CD4-positive, alpha-beta T cell (primary cell): ENCODE measurements at regions of chr12 and their contacts with region 1.

Region 1: GRCh38 chr12:107884769-107885694 is 110.5 kb downstream of the ASCL4 start:
- DNase-seq: peak in 10 of 14 experiments; percentile 4 to 67 (median 22)
- ATAC-seq: no peak
- H3K4me3 ChIP-seq: no peak overlapping the region
- H3K4me3 Mint-ChIP-seq: no peak overlapping the region
- H3K27ac ChIP-seq: no peak overlapping the region
- H3K27ac Mint-ChIP-seq: no peak overlapping the region
- H3K4me1 ChIP-seq: no peaks in the 10 kb centered on the region
- H3K4me1 Mint-ChIP-seq: no peaks in the 10 kb centered on the region
- H3K27me3 ChIP-seq: peaks cover 0 to 7% of the 10 kb centered on the region in 2 experiments
- H3K27me3 Mint-ChIP-seq: peaks cover 53% of the 10 kb centered on the region
- CTCF ChIP-seq: peak; percentile 37

Region 2: GRCh38 chr12:107670999-107671643 is 213.9 kb before region 1 on chr12:
- CTCF ChIA-PET with region 1: interaction called, 3 read pairs
- POLR2A ChIA-PET with region 1: no interaction called
- intact Hi-C with region 1: loop called (anchors 1 to 5 kb)
- DNase-seq: peak in 7 of 14 experiments; percentile 6 to 60 (median 23)
- ATAC-seq: no peak
- H3K4me3 ChIP-seq: no peak overlapping the region
- H3K4me3 Mint-ChIP-seq: no peak overlapping the region
- H3K27ac ChIP-seq: no peak overlapping the region
- H3K27ac Mint-ChIP-seq: no peak overlapping the region
- H3K4me1 ChIP-seq: no peaks in the 10 kb centered on the region
- H3K4me1 Mint-ChIP-seq: peaks cover 6% of the 10 kb centered on the region
- H3K27me3 ChIP-seq: no peaks in the 10 kb centered on the region
- H3K27me3 Mint-ChIP-seq: peaks cover 24% of the 10 kb centered on the region
- CTCF ChIP-seq: peak; percentile 43

Region 3: DNA sequence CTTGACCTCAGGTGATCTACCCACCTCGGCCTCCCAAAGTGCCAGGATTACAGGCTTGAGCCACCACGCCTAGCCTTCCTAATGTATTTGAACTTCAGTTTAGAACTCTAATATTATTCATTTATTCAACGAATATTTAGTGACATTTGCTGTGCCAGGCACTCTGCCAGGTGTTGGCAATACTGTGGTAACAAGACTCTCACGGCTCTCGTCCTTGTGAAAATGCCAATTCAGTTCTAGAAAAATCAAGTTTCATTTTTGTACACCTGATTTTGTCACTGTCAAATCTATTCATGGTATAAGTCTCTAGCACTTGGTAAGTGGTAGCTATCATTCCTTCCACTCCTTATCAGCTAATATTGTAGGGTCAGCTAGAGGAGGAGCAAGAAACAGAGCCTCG is 205.7 kb before region 1 on chr12:
- CTCF ChIA-PET with region 1: interaction called, 3 read pairs
- POLR2A ChIA-PET with region 1: no interaction called
- intact Hi-C with region 1: loop called (anchors 1 to 5 kb)
- DNase-seq: no peak
- ATAC-seq: no peak
- H3K4me3 ChIP-seq: no peak overlapping the region
- H3K4me3 Mint-ChIP-seq: no peak overlapping the region
- H3K27ac ChIP-seq: no peak overlapping the region
- H3K27ac Mint-ChIP-seq: no peak overlapping the region
- H3K4me1 ChIP-seq: peaks cover under 1% of the 10 kb centered on the region
- H3K4me1 Mint-ChIP-seq: no peaks in the 10 kb centered on the region
- H3K27me3 ChIP-seq: peaks cover 0 to 3% of the 10 kb centered on the region in 2 experiments
- H3K27me3 Mint-ChIP-seq: peaks cover 17% of the 10 kb centered on the region
- CTCF ChIP-seq: no peak